Panc1 (cell line): ENCODE measurements at regions of chr2 and their contacts with region 1.

Region 1: DNA sequence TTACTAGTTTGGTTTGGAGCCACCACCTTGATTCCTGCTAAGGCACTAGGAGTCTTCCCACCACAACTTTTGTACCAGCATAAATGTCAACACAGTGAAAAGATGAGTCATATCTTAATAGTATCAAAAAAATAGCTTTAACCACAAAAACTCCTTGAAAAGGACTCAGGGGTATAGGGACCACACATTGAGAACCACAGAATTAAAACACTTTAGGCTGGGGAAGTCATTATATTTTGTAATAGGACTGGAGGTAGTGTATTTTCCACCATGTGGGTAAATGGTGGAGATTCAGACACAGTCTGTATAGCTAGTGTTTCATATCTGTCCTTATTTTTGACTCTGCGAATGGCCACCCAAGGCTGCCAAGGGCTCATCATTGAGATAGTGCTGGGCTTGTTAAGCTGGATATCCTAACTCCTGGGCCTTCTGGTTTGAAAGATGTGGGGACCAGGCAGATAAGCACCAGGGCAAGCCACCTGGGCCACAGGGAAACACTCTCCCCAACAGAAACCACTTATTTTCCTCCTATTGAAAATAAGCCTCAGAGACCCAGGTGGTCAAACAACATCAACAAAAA is 19.1 kb upstream of the FHL2 start:
- DNase-seq: no peak
- ATAC-seq: no peak
- H3K4me3 ChIP-seq: no peak overlapping the region
- H3K27ac ChIP-seq: peak overlapping the region; percentile 52
- H3K4me1 ChIP-seq: no peaks in the 10 kb centered on the region
- H3K27me3 ChIP-seq: no peaks in the 10 kb centered on the region
- CTCF ChIP-seq: no peak

Region 2: DNA sequence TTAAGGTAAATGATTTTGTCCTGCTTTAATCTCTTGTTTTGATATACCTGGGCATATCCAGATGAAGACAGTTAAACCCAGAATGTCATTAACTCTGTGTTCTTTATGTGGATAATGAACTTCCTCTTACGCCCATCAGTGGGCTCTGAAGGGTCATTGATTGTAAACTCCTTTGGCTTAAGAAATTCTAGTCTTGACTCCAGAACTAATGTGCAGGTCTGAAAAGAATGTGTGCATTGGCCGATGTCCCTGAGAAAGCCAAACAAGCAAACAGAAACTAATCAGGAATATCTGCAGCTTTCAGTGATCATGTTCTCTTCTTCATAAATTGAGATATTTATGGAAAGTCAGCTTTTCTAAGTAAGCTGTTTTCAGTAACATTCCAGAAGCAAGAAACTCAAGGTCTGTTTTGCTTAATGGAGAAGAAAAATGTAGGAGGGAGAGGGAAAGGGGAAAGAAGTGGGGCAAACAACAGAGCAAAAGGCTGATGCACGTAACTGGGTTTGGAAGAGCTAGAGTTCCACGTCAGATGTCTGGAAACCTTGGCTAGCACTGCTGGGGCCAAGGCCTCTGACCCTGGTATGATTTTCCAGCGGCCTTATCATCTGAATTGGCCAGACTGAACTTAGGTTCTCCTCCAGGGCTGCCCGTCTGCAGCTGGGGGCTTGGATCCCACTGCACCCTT is 42.2 kb after region 1 on chr2:
- CTCF ChIA-PET with region 1: no interaction called
- POLR2A ChIA-PET with region 1: interaction called, 12 read pairs
- in situ Hi-C with region 1: no loop called
- intact Hi-C with region 1: no loop called
- DNase-seq: no peak
- ATAC-seq: no peak
- H3K4me3 ChIP-seq: no peak overlapping the region
- H3K27ac ChIP-seq: peak overlapping the region; percentile 57
- H3K4me1 ChIP-seq: peaks cover 26% of the 10 kb centered on the region
- H3K27me3 ChIP-seq: no peaks in the 10 kb centered on the region
- CTCF ChIP-seq: no peak

Region 3: DNA sequence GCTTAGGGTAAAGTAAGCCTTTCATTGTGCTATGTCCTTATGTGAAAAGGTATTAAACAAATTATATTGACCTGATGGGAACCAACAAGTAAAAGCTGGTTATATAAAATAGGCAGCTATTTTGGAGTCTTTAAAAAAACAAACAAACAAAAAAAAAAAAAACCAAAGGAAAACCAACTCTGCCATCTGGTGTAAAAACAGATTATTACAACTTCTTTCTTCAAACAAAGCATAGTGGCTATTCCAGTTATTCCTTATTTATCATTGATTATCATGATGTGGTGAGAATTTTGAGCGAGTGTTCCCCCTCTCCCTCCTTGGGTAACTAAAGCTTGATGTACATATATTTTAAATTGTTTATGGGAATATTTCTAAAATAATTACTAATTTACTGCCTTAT is 103.3 kb after region 1 on chr2:
- CTCF ChIA-PET with region 1: no interaction called
- POLR2A ChIA-PET with region 1: no interaction called
- in situ Hi-C with region 1: no loop called
- intact Hi-C with region 1: no loop called
- DNase-seq: peak; percentile 42
- ATAC-seq: no peak
- H3K4me3 ChIP-seq: no peak overlapping the region
- H3K27ac ChIP-seq: peak overlapping the region; percentile 88
- H3K4me1 ChIP-seq: peaks cover 46% of the 10 kb centered on the region
- H3K27me3 ChIP-seq: no peaks in the 10 kb centered on the region
- CTCF ChIP-seq: peak; percentile 61; the same call in 1 of the 2 replicates